ENCODE measurements at regions of chr10 and their contacts with region 1.

Region 1: GRCh38 chr10:30999070-30999712 is 32.5 kb downstream of the ZNF438 start:
- DNase-seq: no peak
- H3K4me3 ChIP-seq: no peak overlapping the region
- H3K4me3 Mint-ChIP-seq: peak overlapping the region; percentile 74 to 86 (median 80)
- H3K27ac ChIP-seq: peak overlapping the region; percentile 49
- H3K27ac Mint-ChIP-seq: peak overlapping the region; percentile 52 to 95 (median 86)
- H3K4me1 ChIP-seq: peaks cover 4% of the 10 kb centered on the region
- H3K4me1 Mint-ChIP-seq: peaks cover 29 to 42% (median 41%) of the 10 kb centered on the region in 3 donors
- H3K27me3 ChIP-seq: no peaks in the 10 kb centered on the region
- H3K27me3 Mint-ChIP-seq: no peaks in the 10 kb centered on the region

Region 2: GRCh38 chr10:31031558-31032257 is 32.5 kb after region 1 on chr10 and contains the start of gene ZNF438:
- CTCF ChIA-PET with region 1: interaction called, 7 read pairs
- POLR2A ChIA-PET with region 1: interaction called, 13 read pairs
- DNase-seq: peak; percentile 92 to 97 (median 96)
- H3K4me3 ChIP-seq: peak within 1 kb of the TSS; percentile 93
- H3K4me3 Mint-ChIP-seq: peak within 1 kb of the TSS; percentile 83 to 95 (median 91)
- H3K27ac ChIP-seq: peak within 1 kb of the TSS; percentile 97
- H3K27ac Mint-ChIP-seq: peak within 1 kb of the TSS; percentile 96 to 99 (median 98)
- H3K4me1 ChIP-seq: peaks cover 14% of the 10 kb centered on the region
- H3K4me1 Mint-ChIP-seq: peaks cover 12 to 26% (median 19%) of the 10 kb centered on the region in 3 donors
- H3K27me3 ChIP-seq: no peaks in the 10 kb centered on the region
- H3K27me3 Mint-ChIP-seq: no peaks in the 10 kb centered on the region
- total RNA-seq, gene ZNF438: 2.9 to 3.9 TPM